AG04450 (cell line): ENCODE measurements at regions of chr2 and their contacts with region 1.

Region 1: GRCh38 chr2:152058655-152059054 is 40.2 kb downstream of the CACNB4 start:
- DNase-seq: no peak
- H3K4me3 ChIP-seq: no peak overlapping the region
- H3K27ac ChIP-seq: no peak overlapping the region
- H3K27me3 ChIP-seq: no peaks in the 10 kb centered on the region
- CTCF ChIP-seq: no peak

Region 2: GRCh38 chr2:152606941-152607340 is 548.3 kb after region 1 on chr2:
- CTCF ChIA-PET with region 1: interaction called, 10 read pairs
- POLR2A ChIA-PET with region 1: no interaction called
- DNase-seq: no peak
- H3K4me3 ChIP-seq: no peak overlapping the region
- H3K27ac ChIP-seq: no peak overlapping the region
- H3K27me3 ChIP-seq: no peaks in the 10 kb centered on the region
- CTCF ChIP-seq: no peak